MCF 10A (cell line): ENCODE measurements at regions of chr12 and their contacts with region 1.

Region 1: GRCh38 chr12:95204141-95204866 is 13.0 kb downstream of the FGD6 start:
- DNase-seq: peak; percentile 100
- H3K4me3 Mint-ChIP-seq: peak overlapping the region; percentile 77
- H3K27ac Mint-ChIP-seq: peak overlapping the region; percentile 98
- H3K4me1 Mint-ChIP-seq: peaks cover 45% of the 10 kb centered on the region
- H3K27me3 Mint-ChIP-seq: no peaks in the 10 kb centered on the region
- CTCF ChIP-seq: no peak

Region 2: GRCh38 chr12:95151821-95152220 is 52.5 kb before region 1 on chr12:
- CTCF ChIA-PET with region 1: interaction called, 3 read pairs
- POLR2A ChIA-PET with region 1: interaction called, 14 read pairs
- intact Hi-C with region 1: no loop called
- DNase-seq: no peak
- H3K4me3 Mint-ChIP-seq: no peak overlapping the region
- H3K27ac Mint-ChIP-seq: no peak overlapping the region
- H3K4me1 Mint-ChIP-seq: no peaks in the 10 kb centered on the region
- H3K27me3 Mint-ChIP-seq: no peaks in the 10 kb centered on the region
- CTCF ChIP-seq: no peak

Region 3: GRCh38 chr12:95173392-95174251 is 30.7 kb before region 1 on chr12:
- CTCF ChIA-PET with region 1: interaction called, 4 read pairs
- POLR2A ChIA-PET with region 1: interaction called, 48 read pairs
- intact Hi-C with region 1: no loop called
- DNase-seq: peak; percentile 92
- H3K4me3 Mint-ChIP-seq: no peak overlapping the region
- H3K27ac Mint-ChIP-seq: peak overlapping the region; percentile 31
- H3K4me1 Mint-ChIP-seq: peaks cover 26% of the 10 kb centered on the region
- H3K27me3 Mint-ChIP-seq: no peaks in the 10 kb centered on the region
- CTCF ChIP-seq: no peak